Endothelial cell of umbilical vein (primary cell): ENCODE measurements at regions of chr12 and their contacts with region 1.

Region 1: DNA sequence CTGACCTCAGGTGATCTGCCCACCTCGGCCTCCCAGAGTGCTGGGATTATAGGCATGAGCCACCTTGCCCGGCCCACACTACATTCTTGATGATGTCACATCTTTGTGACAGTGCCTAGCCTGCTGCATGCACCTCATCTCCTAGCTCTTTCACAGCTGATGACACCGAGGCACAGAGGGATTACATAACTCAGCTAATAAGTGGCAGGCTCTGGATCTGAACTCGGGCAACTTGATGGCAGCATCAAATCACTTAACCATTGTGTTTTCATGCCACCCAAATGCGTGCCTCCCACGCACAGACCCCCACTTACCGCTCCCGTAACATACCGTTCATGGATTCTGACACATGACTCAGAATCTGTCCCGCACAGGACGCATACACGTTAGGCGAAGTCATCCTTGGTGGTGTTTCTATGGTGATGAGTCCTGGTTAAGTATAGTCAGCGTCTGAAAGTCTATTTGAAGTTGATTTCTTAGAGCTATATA is 7.4 kb downstream of the TMEM120B start:
- DNase-seq: peak; percentile 19
- H3K4me3 ChIP-seq: no peak overlapping the region
- H3K27ac ChIP-seq: no peak overlapping the region
- H3K4me1 ChIP-seq: peaks cover 7% of the 10 kb centered on the region
- H3K27me3 ChIP-seq: no peaks in the 10 kb centered on the region
- CTCF ChIP-seq: no peak
- POLR2A ChIP-seq: no peak

Region 2: GRCh38 chr12:121781998-121782979 is 62.3 kb after region 1 on chr12:
- CTCF ChIA-PET with region 1: no interaction called
- POLR2A ChIA-PET with region 1: interaction called, 11 read pairs
- dilution Hi-C with region 1: no loop called
- intact Hi-C with region 1: no loop called
- DNase-seq: no peak
- H3K4me3 ChIP-seq: no peak overlapping the region
- H3K27ac ChIP-seq: no peak overlapping the region
- H3K4me1 ChIP-seq: peaks cover 11% of the 10 kb centered on the region
- H3K27me3 ChIP-seq: no peaks in the 10 kb centered on the region
- CTCF ChIP-seq: no peak
- POLR2A ChIP-seq: no peak

Region 3: DNA sequence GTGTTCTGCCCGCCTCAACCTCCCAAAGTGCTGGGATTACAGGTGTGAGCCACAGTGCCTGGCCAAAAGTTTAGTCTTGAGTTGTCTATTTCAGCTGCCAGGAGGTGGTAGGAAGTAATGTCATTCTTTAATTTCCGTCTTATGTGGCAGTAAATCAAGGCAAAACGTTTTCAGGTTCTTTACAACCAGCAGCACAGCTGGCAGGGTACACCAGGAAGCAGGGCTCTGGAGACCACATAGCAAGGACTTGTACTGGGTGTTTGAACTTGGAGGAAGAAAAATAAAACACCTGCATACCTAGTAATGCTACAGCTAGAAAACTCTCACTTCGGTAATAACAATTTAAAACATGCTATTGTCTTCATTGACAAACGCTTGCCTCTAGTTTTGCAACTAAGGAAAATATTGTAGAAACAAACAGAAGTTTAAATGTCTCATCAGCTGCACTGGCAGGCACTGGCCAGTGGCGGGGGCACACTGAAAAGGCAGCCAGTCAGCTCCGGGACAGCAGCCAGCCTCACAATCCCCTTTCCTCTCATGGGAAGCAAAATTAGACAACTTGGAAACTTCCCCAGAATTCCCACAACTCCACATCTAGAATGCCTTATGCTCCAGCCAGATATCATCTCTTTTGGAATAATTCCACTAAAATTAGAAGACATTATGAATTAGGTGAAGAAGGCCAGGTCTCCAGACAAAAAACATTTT is 630.3 kb after region 1 on chr12:
- CTCF ChIA-PET with region 1: no interaction called
- POLR2A ChIA-PET with region 1: no interaction called
- dilution Hi-C with region 1: no loop called
- intact Hi-C with region 1: no loop called
- DNase-seq: peak; percentile 91
- H3K4me3 ChIP-seq: no peak overlapping the region
- H3K27ac ChIP-seq: peak overlapping the region; percentile 18
- H3K4me1 ChIP-seq: peaks cover 9% of the 10 kb centered on the region
- H3K27me3 ChIP-seq: no peaks in the 10 kb centered on the region
- CTCF ChIP-seq: peak; percentile 13 to 43
- POLR2A ChIP-seq: no peak